Mammary epithelial cell (primary cell): ENCODE measurements at regions of chr10 and their contacts with region 1.

Region 1: DNA sequence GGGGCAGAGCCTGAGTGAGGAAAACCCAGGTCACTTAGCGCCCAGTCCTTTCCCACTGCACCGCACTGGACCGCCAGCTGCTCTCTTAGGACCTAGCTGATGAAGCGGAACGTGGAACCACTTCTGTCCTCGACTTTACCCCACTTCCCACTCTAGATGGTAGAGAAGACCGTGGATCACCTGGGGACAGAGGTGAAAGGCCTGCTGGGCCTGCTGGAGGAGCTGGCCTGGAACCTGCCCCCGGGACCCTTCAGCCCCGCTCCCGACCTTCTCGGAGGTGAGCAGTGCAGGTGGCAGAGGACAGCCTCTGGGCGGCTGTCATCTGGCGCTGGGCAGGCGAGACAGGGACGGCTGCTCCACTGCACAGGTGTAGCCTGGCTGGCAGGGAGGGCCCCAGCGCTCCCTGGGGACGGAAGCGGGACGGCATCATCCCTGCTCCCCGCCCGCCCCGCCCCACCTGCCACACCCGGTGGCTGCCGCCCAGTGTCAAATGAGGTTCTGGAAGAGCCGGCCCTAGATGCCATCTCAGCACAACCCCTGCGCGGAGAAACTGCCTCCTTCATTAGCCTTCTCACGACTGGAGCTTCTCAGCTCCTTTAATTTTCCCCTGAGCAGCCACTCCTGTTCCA is 11.7 kb downstream of the PLAC9 start:
- DNase-seq: no peak
- H3K4me3 ChIP-seq: peak overlapping the region in 2 of 3 experiments; percentile 5 to 33
- H3K27ac ChIP-seq: no peak overlapping the region
- H3K4me1 ChIP-seq: peaks cover 25% of the 10 kb centered on the region
- H3K27me3 ChIP-seq: no peaks in the 10 kb centered on the region
- CTCF ChIP-seq: no peak

Region 2: DNA sequence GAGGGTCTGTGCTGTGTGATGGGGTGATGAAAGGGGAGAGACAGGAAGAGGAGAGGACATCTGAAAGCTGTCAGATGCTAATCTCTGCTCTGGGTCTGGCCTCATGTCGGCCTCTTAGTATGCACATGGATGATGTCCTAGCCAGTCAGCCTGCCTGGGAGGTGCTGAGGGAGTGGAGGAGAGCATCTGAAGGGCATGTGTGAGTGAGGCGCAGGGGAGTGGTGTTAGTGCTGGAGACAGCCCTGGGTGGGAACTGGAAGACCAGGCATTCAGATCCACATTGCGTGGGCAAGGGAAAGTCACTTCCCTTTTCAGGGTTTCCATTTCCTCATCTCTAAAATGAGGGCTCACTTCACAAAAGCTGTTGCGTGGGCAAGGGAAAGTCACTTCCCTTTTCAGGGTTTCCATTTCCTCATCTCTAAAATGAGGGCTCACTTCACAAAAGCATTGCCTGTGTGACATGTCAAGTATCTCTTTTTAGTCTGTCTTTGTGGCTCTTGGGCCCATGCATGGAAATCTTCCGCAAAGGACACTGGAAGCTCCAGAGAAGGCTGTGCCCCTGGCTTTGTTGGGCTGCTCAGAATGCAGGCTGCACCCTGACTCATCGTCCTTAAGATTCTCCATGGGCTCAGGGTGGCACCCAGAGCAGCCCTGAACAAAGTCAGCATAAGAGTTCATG is 205.3 kb before region 1 on chr10:
- CTCF ChIA-PET with region 1: no interaction called
- dilution Hi-C with region 1: no loop called
- in situ Hi-C with region 1: no loop called
- intact Hi-C with region 1: no loop called
- DNase-seq: no peak
- H3K4me3 ChIP-seq: no peak overlapping the region
- H3K27ac ChIP-seq: no peak overlapping the region
- H3K4me1 ChIP-seq: no peaks in the 10 kb centered on the region
- H3K27me3 ChIP-seq: peaks cover 17% of the 10 kb centered on the region
- CTCF ChIP-seq: no peak

Region 3: DNA sequence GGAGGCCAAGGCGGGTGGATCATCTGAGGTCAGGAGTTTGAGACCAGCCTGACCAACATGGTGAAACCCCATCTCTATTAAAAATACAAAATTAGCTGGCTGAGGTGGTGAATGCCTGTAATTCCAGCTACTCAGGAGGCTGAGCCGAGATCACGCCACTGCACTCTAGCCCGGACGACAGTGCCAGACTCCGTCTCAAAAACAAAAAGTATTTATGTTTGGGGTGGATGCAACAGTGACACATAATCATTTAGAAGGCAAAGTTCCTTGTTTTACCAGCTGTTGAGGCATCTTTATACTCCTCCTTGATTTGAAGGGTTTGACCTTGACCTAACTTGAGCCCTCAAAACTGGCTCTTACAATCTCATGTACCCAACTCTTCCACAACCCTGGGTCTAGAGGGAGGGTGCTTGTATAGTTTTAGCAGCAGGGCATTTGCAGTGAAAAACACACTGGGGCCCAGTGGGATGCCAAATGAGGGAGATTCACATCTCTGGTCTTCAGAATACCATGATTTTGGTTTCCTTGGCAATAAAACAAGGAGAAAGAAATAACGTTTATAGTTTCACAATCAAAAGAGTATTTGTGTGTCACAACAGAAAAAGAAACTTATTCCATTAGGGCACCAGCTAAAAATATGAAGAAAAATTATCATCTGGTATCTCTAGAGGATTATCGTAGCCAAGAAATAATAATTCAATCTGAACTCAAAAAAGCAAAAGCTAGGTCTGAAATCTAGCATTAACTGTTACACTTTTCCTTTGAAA is 79.9 kb before region 1 on chr10:
- CTCF ChIA-PET with region 1: no interaction called
- dilution Hi-C with region 1: no loop called
- in situ Hi-C with region 1: no loop called
- intact Hi-C with region 1: loop called (anchors 2 kb)
- DNase-seq: no peak
- H3K4me3 ChIP-seq: no peak overlapping the region
- H3K27ac ChIP-seq: no peak overlapping the region
- H3K4me1 ChIP-seq: no peaks in the 10 kb centered on the region
- H3K27me3 ChIP-seq: no peaks in the 10 kb centered on the region
- CTCF ChIP-seq: no peak

Region 4: DNA sequence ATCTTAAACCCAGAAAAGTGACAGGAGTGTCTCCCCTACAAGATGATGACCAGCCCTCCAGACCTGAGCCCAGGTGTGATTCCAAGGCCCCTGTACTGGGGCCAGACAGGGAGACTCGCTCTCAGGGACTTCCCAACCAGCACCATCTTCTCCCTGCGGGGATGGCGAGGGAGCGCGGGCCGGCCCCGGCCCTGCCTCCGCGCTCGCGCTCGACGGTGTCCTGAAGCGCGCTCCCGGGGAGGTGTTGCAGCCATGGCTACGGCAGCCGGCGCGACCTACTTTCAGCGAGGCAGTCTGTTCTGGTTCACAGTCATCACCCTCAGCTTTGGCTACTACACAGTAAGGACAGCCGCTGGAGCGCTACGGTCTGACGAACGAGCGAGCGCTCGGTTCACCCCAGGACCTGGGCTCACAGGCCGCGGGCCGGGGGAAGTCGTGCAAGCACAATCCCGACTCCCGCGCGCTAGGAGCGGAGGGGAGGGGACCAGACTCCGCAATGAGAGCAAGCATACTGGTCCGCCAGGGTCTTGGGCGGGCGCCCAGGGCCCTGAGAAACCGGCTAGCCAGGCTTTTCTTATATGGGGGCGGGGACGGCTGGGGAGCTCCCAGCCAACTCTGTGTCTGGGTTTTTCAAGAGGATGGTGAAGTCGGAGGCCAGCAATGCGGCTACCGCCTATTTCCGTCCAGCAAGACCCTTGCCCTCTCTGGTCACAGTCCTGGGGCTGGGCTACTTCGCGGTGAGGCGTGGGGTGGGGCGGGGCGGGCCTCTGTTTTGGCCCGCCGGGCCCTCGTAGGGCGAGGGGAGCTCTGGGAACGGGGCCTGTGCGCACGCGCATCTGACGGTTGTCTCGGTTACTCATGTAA is 65.5 kb before region 1 on chr10 and contains the start of gene TMEM254:
- CTCF ChIA-PET with region 1: no interaction called
- dilution Hi-C with region 1: no loop called
- in situ Hi-C with region 1: no loop called
- intact Hi-C with region 1: loop called (anchors 5 kb)
- DNase-seq: peak; percentile 80
- H3K4me3 ChIP-seq: peak within 1 kb of the TSS; percentile 67 to 70 (median 69)
- H3K27ac ChIP-seq: peak within 1 kb of the TSS; percentile 82
- H3K4me1 ChIP-seq: peaks cover 25% of the 10 kb centered on the region
- H3K27me3 ChIP-seq: no peaks in the 10 kb centered on the region
- CTCF ChIP-seq: no peak
- total RNA-seq, gene TMEM254: 15.5 to 18.1 TPM

Region 5: GRCh38 chr10:80177781-80178540 is 33.8 kb after region 1 on chr10:
- CTCF ChIA-PET with region 1: no interaction called
- dilution Hi-C with region 1: no loop called
- in situ Hi-C with region 1: no loop called
- intact Hi-C with region 1: no loop called
- DNase-seq: no peak
- H3K4me3 ChIP-seq: no peak overlapping the region
- H3K27ac ChIP-seq: no peak overlapping the region
- H3K4me1 ChIP-seq: peaks cover 7% of the 10 kb centered on the region
- H3K27me3 ChIP-seq: no peaks in the 10 kb centered on the region
- CTCF ChIP-seq: no peak

Region 6: DNA sequence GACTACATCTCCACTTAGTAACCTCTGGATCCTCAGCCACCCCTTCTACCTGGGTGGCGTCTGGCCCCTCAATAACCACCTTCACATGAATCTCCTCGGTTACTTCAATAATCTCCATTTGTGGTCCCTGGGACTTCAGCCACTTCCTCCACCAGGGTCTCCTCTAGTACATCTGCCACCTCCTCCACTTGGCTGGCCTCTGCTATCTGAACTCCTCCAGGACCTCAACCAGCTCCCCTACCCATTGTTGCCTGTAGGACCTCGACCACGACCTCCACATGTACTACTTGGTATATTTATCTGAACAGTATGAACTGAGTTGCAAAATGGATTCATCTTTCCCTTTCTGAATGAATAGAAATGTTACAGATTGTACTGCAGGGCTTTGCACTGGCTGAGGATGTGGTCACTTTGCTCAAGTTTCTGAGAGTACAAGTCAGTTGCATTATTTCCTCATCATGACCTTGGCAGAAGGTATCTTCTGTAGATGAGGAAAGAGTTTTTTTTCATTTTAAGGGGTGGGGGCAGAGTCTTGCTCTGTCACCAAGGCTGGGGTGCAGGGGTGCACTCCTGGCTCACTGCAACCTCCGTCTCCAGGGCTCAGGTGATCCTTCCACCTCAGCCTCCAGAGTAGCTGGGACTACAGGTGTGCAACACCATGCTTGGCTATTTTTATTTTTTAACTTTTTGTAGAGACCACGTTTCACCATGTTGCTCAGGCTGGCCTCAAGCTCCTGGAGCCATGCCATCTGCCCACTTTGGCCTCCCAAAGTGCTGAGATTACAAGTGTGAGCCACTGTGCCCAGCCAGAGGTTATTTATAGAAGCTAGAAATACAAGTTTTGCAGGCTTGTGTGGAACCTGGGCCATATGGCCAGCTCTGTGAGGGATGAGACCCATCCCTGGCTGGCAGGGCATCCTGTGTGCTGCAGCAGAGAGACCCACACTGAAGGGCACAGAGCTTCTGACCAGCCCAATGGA is 109.4 kb after region 1 on chr10:
- CTCF ChIA-PET with region 1: no interaction called
- dilution Hi-C with region 1: no loop called
- in situ Hi-C with region 1: loop called in 1 of 2 experiments (anchors 25 kb)
- intact Hi-C with region 1: no loop called
- DNase-seq: no peak
- H3K4me3 ChIP-seq: no peak overlapping the region
- H3K27ac ChIP-seq: no peak overlapping the region
- H3K4me1 ChIP-seq: peaks cover 15% of the 10 kb centered on the region
- H3K27me3 ChIP-seq: no peaks in the 10 kb centered on the region
- CTCF ChIP-seq: no peak

Region 7: DNA sequence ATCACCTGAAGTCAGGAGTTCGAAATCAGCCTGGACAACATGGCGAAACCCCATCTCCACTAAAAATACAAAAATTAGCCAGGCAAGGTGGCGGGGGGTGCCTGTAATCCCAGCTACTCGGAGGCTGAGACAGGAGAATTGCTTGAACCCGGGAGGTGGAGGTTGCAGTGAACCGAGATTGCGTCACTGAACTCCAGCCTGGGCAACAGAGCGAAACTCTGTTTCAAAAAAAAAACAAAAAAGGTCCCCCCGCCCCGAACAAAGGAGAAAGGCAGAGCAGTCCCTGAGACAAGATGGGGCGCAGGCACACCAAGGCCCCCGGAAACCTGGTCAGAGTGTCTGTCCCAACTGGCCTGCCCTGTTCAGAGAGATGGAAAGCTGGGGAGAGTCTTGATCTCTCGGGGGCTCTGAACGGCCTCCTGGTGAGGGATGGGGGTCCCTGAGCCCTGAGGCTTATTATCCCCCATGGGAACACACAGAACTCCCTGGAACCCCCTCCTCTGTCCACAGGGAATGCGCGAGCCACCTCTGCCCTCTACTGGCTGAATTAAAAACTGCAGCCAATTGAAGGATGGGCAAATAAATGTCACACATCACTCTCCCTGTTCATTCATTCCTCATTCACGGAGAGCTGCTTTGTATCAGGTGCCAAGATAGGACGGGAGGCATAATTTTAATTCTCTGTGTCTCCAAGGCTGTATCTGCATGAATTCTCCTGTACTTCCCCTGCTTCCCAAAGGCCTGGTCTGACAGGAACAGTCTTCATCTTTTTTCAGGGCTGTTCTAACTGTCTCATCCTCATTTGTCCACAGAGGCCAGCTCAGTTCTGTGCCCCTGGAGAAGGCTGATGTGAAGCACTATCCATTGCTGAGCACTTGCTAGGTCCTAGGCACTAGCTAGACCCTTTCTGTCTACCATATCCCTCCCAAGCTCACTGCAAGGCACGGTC is 116.4 kb after region 1 on chr10:
- CTCF ChIA-PET with region 1: interaction called, 7 read pairs
- dilution Hi-C with region 1: no loop called
- in situ Hi-C with region 1: no loop called
- intact Hi-C with region 1: loop called (anchors 1 kb)
- DNase-seq: peak; percentile 20
- H3K4me3 ChIP-seq: no peak overlapping the region
- H3K27ac ChIP-seq: no peak overlapping the region
- H3K4me1 ChIP-seq: no peaks in the 10 kb centered on the region
- H3K27me3 ChIP-seq: no peaks in the 10 kb centered on the region
- CTCF ChIP-seq: peak; percentile 88 to 89